ENCODE measurements at regions of chr2 and their contacts with region 1.

Region 1: GRCh38 chr2:176096986-176097819 is 2.4 kb upstream of the HOXD12 start:
- DNase-seq: peak; percentile 70
- H3K4me3 Mint-ChIP-seq: peak overlapping the region; percentile 57
- H3K27ac Mint-ChIP-seq: peak overlapping the region; percentile 14
- H3K4me1 Mint-ChIP-seq: peaks cover 18% of the 10 kb centered on the region
- H3K27me3 Mint-ChIP-seq: peaks cover 84% of the 10 kb centered on the region

Region 2: DNA sequence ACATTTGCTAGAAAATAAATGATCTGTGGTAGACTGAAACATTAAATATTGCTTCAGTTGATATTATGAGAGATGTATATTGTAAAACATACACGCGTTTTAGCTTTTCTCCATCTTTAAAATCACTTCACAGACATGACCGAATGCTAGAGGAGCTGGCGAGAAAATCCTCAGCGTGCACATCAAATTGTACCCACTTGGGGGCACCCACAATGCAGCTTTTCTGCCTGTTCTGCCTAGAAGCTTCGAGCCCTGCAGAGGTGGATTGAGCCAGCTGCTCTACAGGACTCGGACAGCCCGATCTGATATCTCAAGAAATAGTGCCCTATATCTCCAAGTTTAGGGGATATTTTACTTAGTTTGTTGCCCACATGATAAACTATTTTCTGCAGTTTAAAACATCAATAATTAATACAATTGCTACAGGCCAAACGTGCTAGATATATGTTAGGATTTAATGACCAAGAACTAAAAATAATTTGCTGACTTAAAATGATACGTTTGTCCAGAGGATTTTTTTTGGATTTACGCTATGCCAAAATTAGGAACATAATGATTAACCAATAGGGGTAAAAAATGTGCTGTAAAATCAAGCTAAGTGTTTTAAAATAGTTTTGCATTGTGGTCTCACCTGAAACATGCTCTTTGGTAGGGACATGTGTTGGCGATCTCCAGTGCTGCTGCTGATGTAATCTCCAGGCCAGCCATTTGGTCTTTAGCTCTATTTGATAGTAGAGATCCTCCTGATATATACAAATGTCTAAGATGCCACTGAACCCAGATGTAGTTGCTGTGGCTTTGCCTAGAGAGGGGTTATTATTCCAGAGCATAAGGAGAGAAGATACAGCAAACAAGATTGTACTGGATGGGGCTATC is 893.3 kb before region 1 on chr2:
- CTCF ChIA-PET with region 1: interaction called, 5 read pairs
- POLR2A ChIA-PET with region 1: no interaction called
- intact Hi-C with region 1: loop called (anchors 10 kb)
- DNase-seq: peak; percentile 76
- H3K4me3 Mint-ChIP-seq: no peak overlapping the region
- H3K27ac Mint-ChIP-seq: no peak overlapping the region
- H3K4me1 Mint-ChIP-seq: peaks cover 6% of the 10 kb centered on the region
- H3K27me3 Mint-ChIP-seq: peaks cover 14% of the 10 kb centered on the region

Region 3: DNA sequence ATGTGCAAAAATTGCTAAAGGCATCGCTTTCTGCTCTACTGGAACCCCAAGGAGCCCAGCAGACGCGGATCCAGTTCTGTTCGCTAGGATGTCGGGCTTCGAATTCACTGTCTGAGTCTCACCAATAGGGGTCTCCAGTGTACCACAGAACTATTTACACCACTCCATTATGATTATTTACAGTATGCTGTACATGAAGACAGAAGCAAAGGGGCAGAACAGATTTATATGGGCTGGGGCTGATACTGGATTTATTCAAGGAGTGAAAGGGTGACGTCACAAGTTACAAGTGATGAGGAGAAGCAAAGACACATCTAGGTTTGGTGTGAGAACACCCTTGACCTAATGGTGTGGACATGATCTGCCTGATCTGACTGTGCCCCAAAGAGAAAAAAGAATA is 730.4 kb before region 1 on chr2:
- CTCF ChIA-PET with region 1: interaction called, 10 read pairs
- POLR2A ChIA-PET with region 1: no interaction called
- intact Hi-C with region 1: loop called (anchors 1 kb)
- DNase-seq: peak; percentile 18
- H3K4me3 Mint-ChIP-seq: no peak overlapping the region
- H3K27ac Mint-ChIP-seq: no peak overlapping the region
- H3K4me1 Mint-ChIP-seq: no peaks in the 10 kb centered on the region
- H3K27me3 Mint-ChIP-seq: peaks cover 9% of the 10 kb centered on the region

Region 4: DNA sequence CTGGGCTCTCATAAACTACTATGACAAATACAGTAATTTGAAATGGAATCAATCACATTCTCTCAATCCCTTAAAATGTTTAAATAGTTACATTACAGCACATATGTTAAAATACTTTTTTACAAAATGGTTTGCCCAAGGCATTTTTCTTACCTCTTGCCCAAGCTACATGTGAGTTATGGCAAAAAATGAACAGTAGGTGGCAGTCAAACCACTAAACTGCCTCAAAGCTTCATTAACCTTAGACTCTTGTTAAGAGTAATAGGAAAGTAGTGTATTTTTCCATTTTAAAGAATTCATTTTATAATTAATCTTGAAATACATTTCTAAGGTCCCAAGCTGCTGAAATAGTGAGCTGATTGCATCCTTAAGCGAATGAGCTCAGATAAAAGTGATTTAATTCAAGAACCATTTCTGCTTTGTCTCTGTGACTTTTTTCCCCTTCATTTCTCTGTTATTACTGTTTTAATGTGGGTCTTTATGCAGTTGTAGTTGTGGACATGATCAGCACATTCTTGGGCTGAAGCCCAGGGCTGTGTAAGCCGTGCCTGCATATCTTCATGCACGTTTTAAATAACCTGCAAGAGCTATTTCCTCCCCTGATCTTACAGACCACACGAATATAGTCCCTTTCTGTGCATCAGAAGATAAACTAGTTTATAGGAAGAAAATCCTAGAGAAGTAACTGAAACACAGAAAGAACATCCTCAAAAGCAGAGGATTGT is 406.9 kb before region 1 on chr2:
- CTCF ChIA-PET with region 1: interaction called, 130 read pairs
- POLR2A ChIA-PET with region 1: no interaction called
- intact Hi-C with region 1: loop called (anchors 1 kb)
- DNase-seq: no peak
- H3K4me3 Mint-ChIP-seq: no peak overlapping the region
- H3K27ac Mint-ChIP-seq: no peak overlapping the region
- H3K4me1 Mint-ChIP-seq: no peaks in the 10 kb centered on the region
- H3K27me3 Mint-ChIP-seq: peaks cover 14% of the 10 kb centered on the region

Region 5: DNA sequence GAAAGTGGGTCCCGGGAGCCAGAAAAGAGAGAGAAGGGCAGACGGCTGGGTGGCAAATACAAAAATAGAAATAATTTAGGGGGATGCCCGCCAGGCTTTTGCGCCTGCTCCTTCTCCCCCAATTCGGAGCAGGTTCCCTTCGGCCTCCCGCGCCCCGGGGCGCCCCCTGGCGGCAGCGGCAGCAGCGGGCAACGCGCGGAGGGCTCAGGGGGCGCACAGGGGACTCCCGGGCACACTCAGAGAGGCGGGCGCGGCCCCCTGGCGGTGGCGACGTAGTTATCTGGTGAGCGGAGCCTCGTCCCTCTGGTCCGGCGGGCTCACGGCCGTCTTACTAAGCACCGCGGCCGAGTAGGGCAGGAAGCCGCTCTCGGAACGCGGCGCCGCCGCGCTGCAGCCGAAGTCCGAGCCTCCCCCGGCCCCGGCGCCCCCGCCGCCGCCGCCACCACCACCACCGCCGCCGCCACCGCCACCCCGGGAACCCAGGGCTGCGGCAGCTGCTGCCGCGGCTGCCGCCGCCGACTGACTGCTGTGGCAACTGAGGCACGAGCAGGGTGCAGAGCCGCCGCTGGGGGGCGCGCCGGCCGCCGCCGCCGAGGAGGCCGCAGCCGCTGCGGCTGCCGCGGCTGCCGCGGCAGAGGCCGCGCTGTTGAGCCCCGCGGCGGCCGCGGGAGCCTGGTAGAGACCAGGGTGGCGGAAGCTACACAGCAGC is 17.2 kb before region 1 on chr2:
- CTCF ChIA-PET with region 1: interaction called, 7 read pairs
- POLR2A ChIA-PET with region 1: no interaction called
- intact Hi-C with region 1: loop called (anchors 2 kb)
- DNase-seq: no peak
- H3K4me3 Mint-ChIP-seq: peak overlapping the region; percentile 30
- H3K27ac Mint-ChIP-seq: peak overlapping the region; percentile 42
- H3K4me1 Mint-ChIP-seq: peaks cover 17% of the 10 kb centered on the region
- H3K27me3 Mint-ChIP-seq: peaks cover 74% of the 10 kb centered on the region